Calu3 (cell line): ENCODE measurements at regions of chr2 and their contacts with region 1.

Region 1: DNA sequence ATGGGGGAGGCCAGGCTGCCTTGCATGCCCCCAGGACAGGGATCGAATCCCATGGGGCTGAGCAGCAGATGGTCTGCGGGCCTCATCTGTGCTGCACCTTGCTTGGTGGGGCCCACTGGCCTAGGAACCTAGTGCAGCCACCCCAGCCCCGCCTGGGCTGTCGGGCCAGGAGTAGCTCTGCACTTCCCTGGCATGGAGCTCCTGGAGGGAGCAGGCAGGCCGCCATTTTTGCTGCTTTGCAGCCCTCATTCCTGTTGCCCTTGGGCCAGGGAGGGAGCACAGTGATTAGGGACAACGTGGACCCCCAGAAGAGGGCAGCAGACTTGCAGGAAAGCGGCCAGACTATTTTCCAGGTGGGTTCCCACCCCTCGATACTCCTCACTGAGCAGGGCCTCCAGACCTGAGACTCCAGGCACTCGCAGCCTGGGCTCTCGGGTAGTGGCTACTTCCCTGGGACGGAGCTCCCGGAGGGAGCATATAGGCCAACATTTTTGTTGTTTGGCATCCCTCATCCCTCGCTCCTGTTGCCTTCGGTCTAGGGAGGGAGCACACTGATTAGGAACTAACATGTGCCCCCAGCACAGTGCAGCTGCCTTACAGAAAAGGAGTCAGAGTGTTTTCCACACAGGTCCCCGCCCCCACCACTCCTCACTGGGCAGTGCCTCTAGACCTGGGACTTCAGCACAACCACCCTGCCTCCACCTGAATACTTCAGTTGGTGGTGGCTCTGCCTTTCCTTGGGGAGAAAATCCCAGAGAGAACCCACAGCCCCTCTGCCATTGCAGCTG is 99.5 kb downstream of the MAIP1 start:
- DNase-seq: no peak
- H3K4me3 Mint-ChIP-seq: no peak overlapping the region
- H3K27ac Mint-ChIP-seq: no peak overlapping the region
- H3K4me1 Mint-ChIP-seq: peaks cover 31% of the 10 kb centered on the region
- H3K27me3 Mint-ChIP-seq: no peaks in the 10 kb centered on the region
- CTCF ChIP-seq: no peak

Region 2: DNA sequence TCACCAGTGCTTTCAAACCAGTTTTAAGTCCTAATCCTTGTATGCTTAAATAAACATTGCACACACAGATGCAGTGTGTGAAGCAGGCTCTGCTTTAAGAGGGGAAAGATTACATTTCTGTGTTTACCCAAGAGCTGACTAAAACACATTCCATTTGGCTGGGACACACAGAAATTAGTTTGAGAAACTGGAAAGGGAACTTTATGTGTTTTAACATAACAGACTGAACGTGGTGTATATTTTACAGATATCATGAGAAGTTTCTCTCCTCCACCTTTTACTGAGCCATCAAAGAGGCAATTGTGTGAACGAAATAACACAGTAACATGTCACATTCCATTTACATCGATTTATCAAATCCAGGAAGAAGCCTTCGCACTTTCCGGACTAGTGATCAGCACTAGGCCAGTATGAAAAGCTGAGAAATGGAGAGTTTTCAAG is 22.4 kb after region 1 on chr2:
- CTCF ChIA-PET with region 1: no interaction called
- intact Hi-C with region 1: loop called (anchors 1 kb)
- DNase-seq: peak; percentile 43
- H3K4me3 Mint-ChIP-seq: no peak overlapping the region
- H3K27ac Mint-ChIP-seq: peak overlapping the region; percentile 90
- H3K4me1 Mint-ChIP-seq: peaks cover 35% of the 10 kb centered on the region
- H3K27me3 Mint-ChIP-seq: no peaks in the 10 kb centered on the region
- CTCF ChIP-seq: no peak